ENCODE measurements at regions of chr1 and their contacts with region 1.

Region 1: DNA sequence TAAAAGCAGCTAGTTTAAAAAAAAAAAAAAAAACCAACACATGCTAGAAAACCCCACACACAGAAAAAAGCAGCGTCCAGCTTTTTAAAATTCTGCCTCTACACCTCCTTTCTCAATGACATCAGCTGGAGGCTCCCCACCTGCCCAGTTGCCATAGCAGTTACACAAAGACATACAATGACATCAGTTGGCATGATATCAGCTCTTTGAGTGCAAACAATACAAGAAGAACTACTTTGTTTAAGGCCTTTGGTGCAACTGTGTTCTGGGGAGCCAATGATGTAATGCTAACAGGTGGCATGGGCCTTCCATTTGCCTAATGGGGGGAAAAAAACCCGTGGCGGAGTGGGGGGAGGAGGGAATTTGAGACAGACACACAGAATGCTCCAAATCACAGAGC is 32.9 kb downstream of the DUSP10 start:
- DNase-seq: no peak
- ATAC-seq: peak; percentile 74
- H3K4me3 ChIP-seq: no peak overlapping the region
- H3K27ac ChIP-seq: peak overlapping the region; percentile 81
- H3K4me1 ChIP-seq: peaks cover 51% of the 10 kb centered on the region
- H3K27me3 ChIP-seq: no peaks in the 10 kb centered on the region
- CTCF ChIP-seq: no peak
- EP300 ChIP-seq: peak; percentile 76 to 97
- POLR2A ChIP-seq: no peak
- RAD21 ChIP-seq: no peak; the same call in 1 of the 2 replicates

Region 2: DNA sequence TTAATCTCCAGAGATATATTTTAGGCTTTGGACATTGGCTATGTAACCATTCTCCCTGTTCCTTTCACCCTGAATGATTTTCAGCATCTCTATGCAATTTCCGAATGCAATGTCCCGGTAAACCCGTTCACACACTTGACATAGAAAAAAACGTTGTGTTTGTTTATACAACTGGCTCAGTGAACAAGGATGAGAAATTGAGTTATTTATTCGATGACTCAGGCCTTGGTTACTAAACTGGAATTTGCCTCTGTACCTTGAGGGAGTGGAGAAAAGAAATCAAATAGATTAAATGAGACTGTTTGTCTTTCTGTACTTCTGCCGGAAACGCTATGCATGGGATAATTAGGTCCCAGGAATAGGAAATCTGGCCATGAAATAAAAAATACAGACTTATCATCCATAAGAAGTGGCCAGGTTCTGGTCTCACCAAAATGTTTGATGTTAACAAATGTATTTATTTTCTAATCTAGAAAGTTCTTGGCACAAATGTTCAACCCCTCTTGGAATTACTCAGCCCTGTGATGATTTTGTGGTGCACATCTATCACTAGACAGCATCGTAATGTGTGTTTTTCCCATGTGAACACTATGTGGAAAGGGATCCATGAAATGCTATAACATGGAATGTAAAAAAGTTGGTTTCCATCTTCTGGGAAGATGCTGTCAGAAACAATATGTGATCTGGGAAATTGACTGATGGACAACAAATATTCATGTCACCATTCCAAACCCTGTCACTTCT is 221.0 kb before region 1 on chr1:
- CTCF ChIA-PET with region 1: no interaction called
- POLR2A ChIA-PET with region 1: interaction called, 3 read pairs
- RAD21 ChIA-PET with region 1: no interaction called
- SMC1A ChIA-PET with region 1: no interaction called
- in situ Hi-C with region 1: no loop called
- intact Hi-C with region 1: loop called (anchors 10 kb)
- DNase-seq: no peak
- ATAC-seq: no peak
- H3K4me3 ChIP-seq: no peak overlapping the region
- H3K27ac ChIP-seq: no peak overlapping the region
- H3K4me1 ChIP-seq: no peaks in the 10 kb centered on the region
- H3K27me3 ChIP-seq: no peaks in the 10 kb centered on the region
- CTCF ChIP-seq: no peak
- EP300 ChIP-seq: no peak
- POLR2A ChIP-seq: no peak
- RAD21 ChIP-seq: no peak

Region 3: GRCh38 chr1:221517961-221518360 is 191.0 kb before region 1 on chr1:
- CTCF ChIA-PET with region 1: no interaction called
- POLR2A ChIA-PET with region 1: no interaction called
- RAD21 ChIA-PET with region 1: no interaction called
- SMC1A ChIA-PET with region 1: no interaction called
- in situ Hi-C with region 1: no loop called
- intact Hi-C with region 1: no loop called
- DNase-seq: no peak
- ATAC-seq: no peak
- H3K4me3 ChIP-seq: no peak overlapping the region
- H3K27ac ChIP-seq: no peak overlapping the region
- H3K4me1 ChIP-seq: no peaks in the 10 kb centered on the region
- H3K27me3 ChIP-seq: no peaks in the 10 kb centered on the region
- CTCF ChIP-seq: no peak
- EP300 ChIP-seq: no peak
- POLR2A ChIP-seq: no peak
- RAD21 ChIP-seq: no peak

Region 4: DNA sequence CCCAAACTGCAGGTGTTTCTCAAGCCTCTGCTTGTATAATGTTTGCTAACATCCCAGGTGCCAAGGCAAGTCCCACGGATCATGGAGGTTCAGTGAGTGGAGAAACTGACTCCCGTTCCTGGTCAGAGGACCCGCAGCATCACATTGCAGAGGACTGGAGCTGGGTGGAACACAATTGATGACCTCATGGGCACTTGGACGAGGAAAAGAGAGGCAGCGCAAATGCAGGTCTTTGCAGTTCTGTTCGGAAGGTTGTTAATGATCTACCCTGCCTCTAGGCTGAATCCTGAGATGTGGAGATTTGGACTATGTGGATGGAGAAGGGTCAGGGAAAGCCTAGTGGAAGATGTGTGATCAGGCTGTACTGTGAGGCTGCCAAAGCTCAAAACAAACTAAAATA is 160.0 kb before region 1 on chr1:
- CTCF ChIA-PET with region 1: interaction called, 6 read pairs
- POLR2A ChIA-PET with region 1: no interaction called
- RAD21 ChIA-PET with region 1: interaction called, 20 read pairs
- SMC1A ChIA-PET with region 1: interaction called, 22 read pairs
- in situ Hi-C with region 1: no loop called
- intact Hi-C with region 1: loop called (anchors 5 kb)
- DNase-seq: no peak
- ATAC-seq: no peak
- H3K4me3 ChIP-seq: no peak overlapping the region
- H3K27ac ChIP-seq: no peak overlapping the region
- H3K4me1 ChIP-seq: no peaks in the 10 kb centered on the region
- H3K27me3 ChIP-seq: no peaks in the 10 kb centered on the region
- CTCF ChIP-seq: no peak
- EP300 ChIP-seq: no peak
- POLR2A ChIP-seq: no peak
- RAD21 ChIP-seq: no peak

Region 5: DNA sequence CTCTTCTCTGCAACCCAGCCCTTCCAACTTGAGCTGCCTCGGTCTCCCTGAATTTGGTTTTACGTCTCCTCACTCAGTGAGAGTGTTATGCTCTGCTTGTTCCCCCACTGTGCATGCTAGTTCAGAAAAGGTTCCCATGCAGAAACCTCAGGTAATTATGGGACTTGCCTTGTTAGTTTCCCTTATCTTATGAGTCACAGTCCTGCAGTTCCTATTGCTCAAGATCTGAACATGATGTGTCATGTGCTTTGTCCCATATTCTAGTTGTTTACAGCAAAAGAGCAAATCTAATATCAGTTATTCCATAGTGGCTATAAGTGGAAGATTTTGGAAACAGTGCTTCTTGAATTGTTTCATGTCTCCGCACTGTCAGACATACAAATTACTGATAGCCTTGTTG is 41.5 kb before region 1 on chr1:
- CTCF ChIA-PET with region 1: interaction called, 6 read pairs
- POLR2A ChIA-PET with region 1: no interaction called
- RAD21 ChIA-PET with region 1: interaction called, 7 read pairs
- SMC1A ChIA-PET with region 1: interaction called, 17 read pairs
- in situ Hi-C with region 1: no loop called
- intact Hi-C with region 1: no loop called
- DNase-seq: peak; percentile 72
- ATAC-seq: peak; percentile 98
- H3K4me3 ChIP-seq: no peak overlapping the region
- H3K27ac ChIP-seq: peak overlapping the region; percentile 59
- H3K4me1 ChIP-seq: peaks cover 4% of the 10 kb centered on the region; the same call in 1 of the 2 replicates
- H3K27me3 ChIP-seq: no peaks in the 10 kb centered on the region
- CTCF ChIP-seq: no peak
- EP300 ChIP-seq: peak; percentile 71 to 75
- POLR2A ChIP-seq: no peak
- RAD21 ChIP-seq: 0 out of 2 replicates have a peak, but pooled peaks have one; percentile 19

Region 6: DNA sequence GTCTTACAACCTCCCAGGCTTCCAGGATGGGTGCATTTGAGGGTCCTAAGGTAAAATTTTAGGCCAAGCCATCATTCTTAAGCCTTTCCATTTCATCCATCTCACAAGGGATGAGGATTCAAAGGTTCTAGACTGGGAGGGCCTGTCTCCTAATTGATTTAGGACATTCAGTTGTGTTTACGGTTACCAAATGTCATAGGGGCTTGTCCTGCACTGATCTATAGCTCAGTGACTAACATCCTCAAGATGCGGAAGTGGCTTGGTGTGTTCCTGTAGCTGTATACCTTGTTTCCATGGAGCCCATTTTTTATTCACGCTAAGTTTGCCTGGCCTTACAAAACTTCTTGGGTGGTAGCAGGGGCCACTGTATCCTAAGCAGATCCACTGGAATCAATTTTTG is 19.8 kb before region 1 on chr1:
- CTCF ChIA-PET with region 1: interaction called, 3 read pairs
- POLR2A ChIA-PET with region 1: interaction called, 7 read pairs
- RAD21 ChIA-PET with region 1: interaction called, 10 read pairs
- SMC1A ChIA-PET with region 1: interaction called, 44 read pairs
- in situ Hi-C with region 1: no loop called
- intact Hi-C with region 1: no loop called
- DNase-seq: no peak
- ATAC-seq: no peak
- H3K4me3 ChIP-seq: no peak overlapping the region
- H3K27ac ChIP-seq: no peak overlapping the region
- H3K4me1 ChIP-seq: peaks cover 3% of the 10 kb centered on the region; the same call in 1 of the 2 replicates
- H3K27me3 ChIP-seq: no peaks in the 10 kb centered on the region
- CTCF ChIP-seq: no peak
- EP300 ChIP-seq: no peak
- POLR2A ChIP-seq: no peak
- RAD21 ChIP-seq: no peak

Region 7: GRCh38 chr1:221725735-221726672 is 17.0 kb after region 1 on chr1:
- CTCF ChIA-PET with region 1: interaction called, 29 read pairs
- POLR2A ChIA-PET with region 1: interaction called, 194 read pairs
- RAD21 ChIA-PET with region 1: interaction called, 85 read pairs
- SMC1A ChIA-PET with region 1: interaction called, 292 read pairs
- in situ Hi-C with region 1: no loop called
- intact Hi-C with region 1: loop called (anchors 1 kb)
- DNase-seq: no peak
- ATAC-seq: peak; percentile 67
- H3K4me3 ChIP-seq: peak overlapping the region; percentile 6; the same call in 1 of the 2 replicates
- H3K27ac ChIP-seq: peak overlapping the region; percentile 92
- H3K4me1 ChIP-seq: peaks cover 52% of the 10 kb centered on the region
- H3K27me3 ChIP-seq: no peaks in the 10 kb centered on the region
- CTCF ChIP-seq: no peak
- EP300 ChIP-seq: no peak
- POLR2A ChIP-seq: no peak
- RAD21 ChIP-seq: no peak

Region 8: DNA sequence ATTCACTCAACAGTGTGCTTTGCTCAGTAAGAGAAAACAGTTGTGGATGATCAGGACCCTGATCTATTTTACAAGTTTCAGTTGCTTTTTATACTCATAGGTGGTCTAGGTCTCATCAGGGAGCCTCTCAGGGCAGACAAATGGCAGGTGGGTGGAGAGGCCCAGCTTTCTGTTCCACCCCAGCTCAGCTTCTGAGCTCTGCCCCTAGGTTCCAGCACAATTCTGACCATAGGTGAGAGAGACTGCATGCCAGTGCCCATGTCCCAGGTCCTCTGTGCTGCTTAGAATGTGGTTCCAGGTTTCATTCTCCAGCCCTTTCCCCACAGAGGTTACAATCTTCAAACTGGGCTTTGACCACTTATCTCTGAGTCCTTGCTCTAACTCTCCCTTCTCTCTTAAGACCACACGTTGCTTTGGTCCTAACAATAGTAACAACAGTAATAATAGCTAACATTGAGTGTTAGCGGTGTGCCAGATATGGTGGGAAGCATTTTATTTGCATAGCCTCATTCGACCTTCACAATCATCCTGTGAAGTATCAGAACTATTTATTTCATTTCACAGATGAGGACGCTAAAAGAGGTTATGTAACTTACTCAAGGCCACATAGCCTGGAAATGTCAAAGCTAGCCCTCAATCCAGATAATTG is 52.5 kb after region 1 on chr1:
- CTCF ChIA-PET with region 1: interaction called, 5 read pairs
- POLR2A ChIA-PET with region 1: interaction called, 3 read pairs
- RAD21 ChIA-PET with region 1: interaction called, 70 read pairs
- SMC1A ChIA-PET with region 1: interaction called, 29 read pairs
- in situ Hi-C with region 1: no loop called
- intact Hi-C with region 1: no loop called
- DNase-seq: peak; percentile 91
- ATAC-seq: peak; percentile 80
- H3K4me3 ChIP-seq: peak overlapping the region; percentile 26; the same call in 1 of the 2 replicates
- H3K27ac ChIP-seq: peak overlapping the region; percentile 90
- H3K4me1 ChIP-seq: peaks cover 64% of the 10 kb centered on the region
- H3K27me3 ChIP-seq: no peaks in the 10 kb centered on the region
- CTCF ChIP-seq: no peak
- EP300 ChIP-seq: peak in 1 of 2 experiments; percentile 13; a peak in 1 of 4 replicates
- POLR2A ChIP-seq: 0 out of 2 replicates have a peak, but pooled peaks have one; percentile 26
- RAD21 ChIP-seq: 0 out of 2 replicates have a peak, but pooled peaks have one; percentile 6

Region 9: GRCh38 chr1:221945669-221946068 is 236.7 kb after region 1 on chr1:
- CTCF ChIA-PET with region 1: no interaction called
- POLR2A ChIA-PET with region 1: no interaction called
- RAD21 ChIA-PET with region 1: no interaction called
- SMC1A ChIA-PET with region 1: no interaction called
- in situ Hi-C with region 1: no loop called
- intact Hi-C with region 1: no loop called
- DNase-seq: no peak
- ATAC-seq: no peak
- H3K4me3 ChIP-seq: no peak overlapping the region
- H3K27ac ChIP-seq: no peak overlapping the region
- H3K4me1 ChIP-seq: no peaks in the 10 kb centered on the region
- H3K27me3 ChIP-seq: no peaks in the 10 kb centered on the region
- CTCF ChIP-seq: no peak
- EP300 ChIP-seq: no peak
- POLR2A ChIP-seq: no peak
- RAD21 ChIP-seq: no peak

Measured in GM12878 (cell line).